ENCODE measurements at regions of chr3 and their contacts with region 1.

Region 1: DNA sequence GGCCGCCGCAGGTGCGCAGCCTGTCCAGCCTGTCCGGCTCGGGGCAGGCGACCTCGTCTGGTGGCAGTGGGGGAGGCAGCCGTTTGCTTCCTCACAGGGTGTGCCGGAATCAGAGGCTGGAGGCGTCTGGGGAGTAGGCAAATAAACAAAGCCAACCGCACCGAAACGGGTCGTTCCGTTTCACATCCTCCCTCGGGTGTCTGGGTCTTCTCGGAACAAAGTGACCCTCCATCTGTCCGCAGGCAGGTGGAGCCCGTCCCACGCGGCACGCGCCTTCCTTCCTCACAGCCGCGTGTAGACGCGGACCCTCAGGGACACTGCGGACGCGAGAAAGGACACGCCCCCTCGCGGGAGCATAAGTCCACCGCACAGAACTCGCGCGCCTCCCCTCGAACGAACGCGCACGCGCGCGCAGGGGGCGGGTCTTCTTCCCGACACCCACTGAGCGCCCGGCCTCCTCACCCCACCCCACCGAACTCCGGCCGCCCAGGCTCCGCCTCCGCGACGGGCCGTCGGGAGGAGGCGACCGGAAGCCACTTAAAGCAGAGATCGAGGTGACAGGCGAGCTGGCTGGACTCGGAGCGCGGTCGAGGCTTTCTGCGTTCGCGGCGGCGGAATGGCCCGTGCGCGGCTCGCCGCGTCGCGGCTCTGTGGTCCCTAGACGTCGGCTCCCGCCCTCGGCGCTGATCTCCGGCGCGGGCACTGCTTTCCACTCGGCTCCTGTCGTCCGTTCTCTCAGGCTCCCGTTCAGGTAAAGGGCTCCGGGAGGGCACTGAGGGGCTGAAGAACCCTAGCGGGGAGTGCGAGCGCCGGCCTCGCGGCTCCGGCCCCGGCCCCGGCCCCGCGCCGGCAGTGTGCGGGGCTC is at the start of gene TIPARP:
- DNase-seq: peak; percentile 99
- ATAC-seq: peak; percentile 86
- H3K4me3 Mint-ChIP-seq: peak within 1 kb of the TSS; percentile 77
- H3K27ac Mint-ChIP-seq: peak within 1 kb of the TSS; percentile 89
- H3K4me1 Mint-ChIP-seq: peaks cover 32% of the 10 kb centered on the region
- H3K27me3 Mint-ChIP-seq: no peaks in the 10 kb centered on the region
- total RNA-seq, gene TIPARP: 18.5 to 23.5 TPM

Region 2: GRCh38 chr3:155854141-155854940 is 819.9 kb before region 1 on chr3 and contains the start of gene SLC33A1:
- CTCF ChIA-PET with region 1: no interaction called
- POLR2A ChIA-PET with region 1: no interaction called
- intact Hi-C with region 1: loop called in 1 of 2 experiments (anchors 5 kb)
- DNase-seq: peak; percentile 99
- ATAC-seq: peak; percentile 94
- H3K4me3 Mint-ChIP-seq: peak within 1 kb of the TSS; percentile 99
- H3K27ac Mint-ChIP-seq: peak within 1 kb of the TSS; percentile 99
- H3K4me1 Mint-ChIP-seq: peaks cover 33% of the 10 kb centered on the region
- H3K27me3 Mint-ChIP-seq: no peaks in the 10 kb centered on the region
- total RNA-seq, gene SLC33A1: 19.2 to 19.9 TPM

Region 3: DNA sequence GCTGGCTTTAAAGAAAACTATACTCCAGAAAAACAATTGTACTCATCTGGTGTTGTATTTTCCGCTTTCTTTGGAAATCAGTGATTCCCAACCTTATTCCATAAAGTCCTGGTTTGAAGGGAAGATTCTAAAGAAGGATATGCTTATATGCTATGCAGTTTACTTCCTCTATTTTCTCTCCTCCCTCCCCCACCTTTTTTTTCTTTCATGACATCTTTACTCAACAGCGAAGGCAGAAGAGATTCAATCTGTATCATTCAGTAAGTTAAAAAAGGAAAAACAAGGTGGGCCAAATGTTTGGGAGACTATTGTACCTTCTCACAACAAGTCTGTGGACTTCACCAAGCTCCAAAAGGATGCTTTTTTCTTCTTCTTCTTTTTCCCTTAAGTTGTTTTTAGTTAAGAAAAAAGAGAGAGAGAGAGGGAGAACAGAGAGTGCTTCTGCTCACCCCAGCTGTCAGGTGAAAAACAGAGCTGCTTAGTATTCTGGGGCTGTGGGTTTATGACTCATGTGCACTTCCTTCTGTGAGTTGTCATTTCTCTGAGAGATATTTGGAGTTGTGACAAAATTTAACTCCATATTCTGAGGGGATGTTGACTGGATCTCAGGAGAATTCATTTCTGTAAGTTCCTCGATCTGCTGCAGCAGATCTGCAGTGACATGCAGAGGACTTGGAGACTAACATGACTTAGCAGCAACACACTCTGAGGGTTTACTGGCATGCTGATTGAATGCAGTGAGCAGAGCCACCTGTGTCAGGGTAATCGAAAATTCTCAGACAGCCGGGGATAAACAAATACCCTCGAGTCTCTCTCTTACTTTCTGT is 190.1 kb before region 1 on chr3:
- CTCF ChIA-PET with region 1: no interaction called
- POLR2A ChIA-PET with region 1: no interaction called
- intact Hi-C with region 1: loop called (anchors 1 to 2 kb)
- DNase-seq: peak; percentile 63
- ATAC-seq: peak; percentile 76
- H3K4me3 Mint-ChIP-seq: peak overlapping the region; percentile 69
- H3K27ac Mint-ChIP-seq: peak overlapping the region; percentile 92
- H3K4me1 Mint-ChIP-seq: peaks cover 35% of the 10 kb centered on the region
- H3K27me3 Mint-ChIP-seq: no peaks in the 10 kb centered on the region

Region 4: DNA sequence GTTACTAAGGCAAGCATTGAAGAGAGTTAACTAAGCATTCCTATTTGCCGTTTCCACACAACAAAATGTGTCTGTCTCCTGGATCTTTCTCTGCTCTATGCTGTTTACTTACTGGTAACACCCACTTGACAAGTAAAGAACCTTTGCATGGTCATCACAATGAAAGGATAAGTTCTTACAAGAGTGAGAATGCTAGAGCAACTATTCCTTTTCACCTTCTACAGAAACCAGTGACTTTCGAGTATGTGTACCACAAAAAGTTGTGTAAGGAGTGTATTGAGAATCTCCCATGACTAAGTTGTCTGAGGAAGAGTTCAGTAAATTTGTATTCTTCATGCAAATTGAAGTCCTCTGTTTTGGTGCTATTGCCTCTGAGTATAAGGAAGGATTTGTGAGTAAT is 10.9 kb after region 1 on chr3:
- CTCF ChIA-PET with region 1: interaction called, 6 read pairs
- POLR2A ChIA-PET with region 1: interaction called, 3 read pairs
- intact Hi-C with region 1: loop called in 1 of 2 experiments (anchors 1 kb)
- DNase-seq: no peak
- ATAC-seq: peak; percentile 69
- H3K4me3 Mint-ChIP-seq: no peak overlapping the region
- H3K27ac Mint-ChIP-seq: no peak overlapping the region
- H3K4me1 Mint-ChIP-seq: peaks cover 76% of the 10 kb centered on the region
- H3K27me3 Mint-ChIP-seq: no peaks in the 10 kb centered on the region

Region 5: GRCh38 chr3:156952011-156952410 is 277.7 kb after region 1 on chr3:
- CTCF ChIA-PET with region 1: no interaction called
- POLR2A ChIA-PET with region 1: no interaction called
- intact Hi-C with region 1: no loop called
- DNase-seq: no peak
- ATAC-seq: no peak
- H3K4me3 Mint-ChIP-seq: no peak overlapping the region
- H3K27ac Mint-ChIP-seq: no peak overlapping the region
- H3K4me1 Mint-ChIP-seq: no peaks in the 10 kb centered on the region
- H3K27me3 Mint-ChIP-seq: peaks cover 10% of the 10 kb centered on the region

Region 6: DNA sequence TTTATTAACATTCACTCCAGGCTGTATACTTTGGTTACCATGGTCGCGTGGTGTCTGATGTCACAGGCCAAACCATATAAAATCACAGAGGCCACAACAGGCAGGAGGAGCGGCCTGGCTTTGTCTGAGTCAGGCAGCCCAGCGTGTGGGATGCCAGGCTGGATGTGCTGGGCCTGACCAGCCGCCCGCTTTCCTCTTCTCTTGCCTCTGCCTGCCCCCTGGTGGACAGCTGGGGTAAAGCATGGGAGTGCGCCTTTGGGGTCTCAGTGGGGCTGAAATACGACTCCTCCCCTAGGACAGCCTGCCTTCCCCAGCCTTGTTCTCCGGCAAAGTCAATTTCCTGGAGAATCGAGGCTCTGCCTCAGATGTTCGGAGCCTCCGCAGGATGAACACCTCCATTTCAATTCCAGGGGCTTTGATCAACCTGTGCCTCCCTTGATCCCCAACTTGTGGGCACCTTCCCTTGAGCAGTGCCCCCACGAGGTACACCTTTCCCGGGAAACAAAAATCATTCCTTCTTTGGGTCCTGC is 407.5 kb after region 1 on chr3:
- CTCF ChIA-PET with region 1: interaction called, 6 read pairs
- POLR2A ChIA-PET with region 1: no interaction called
- intact Hi-C with region 1: loop called (anchors 2 kb)
- DNase-seq: peak; percentile 90
- ATAC-seq: peak; percentile 91
- H3K4me3 Mint-ChIP-seq: no peak overlapping the region
- H3K27ac Mint-ChIP-seq: peak overlapping the region; percentile 66
- H3K4me1 Mint-ChIP-seq: peaks cover 32% of the 10 kb centered on the region
- H3K27me3 Mint-ChIP-seq: no peaks in the 10 kb centered on the region

Region 7: GRCh38 chr3:157148196-157148889 is 474.1 kb after region 1 on chr3:
- CTCF ChIA-PET with region 1: no interaction called
- POLR2A ChIA-PET with region 1: no interaction called
- intact Hi-C with region 1: loop called in 1 of 2 experiments (anchors 5 kb)
- DNase-seq: peak; percentile 43
- ATAC-seq: peak; percentile 74
- H3K4me3 Mint-ChIP-seq: peak overlapping the region; percentile 27
- H3K27ac Mint-ChIP-seq: peak overlapping the region; percentile 74
- H3K4me1 Mint-ChIP-seq: peaks cover 45% of the 10 kb centered on the region
- H3K27me3 Mint-ChIP-seq: no peaks in the 10 kb centered on the region

Measured in activated CD4-positive, alpha-beta T cell treated with anti-CD3 and anti-CD28 coated beads for 36 hours (primary cell).